CD4-positive, alpha-beta memory T cell (primary cell): ENCODE measurements at regions of chr6 and their contacts with region 1.

Region 1: DNA sequence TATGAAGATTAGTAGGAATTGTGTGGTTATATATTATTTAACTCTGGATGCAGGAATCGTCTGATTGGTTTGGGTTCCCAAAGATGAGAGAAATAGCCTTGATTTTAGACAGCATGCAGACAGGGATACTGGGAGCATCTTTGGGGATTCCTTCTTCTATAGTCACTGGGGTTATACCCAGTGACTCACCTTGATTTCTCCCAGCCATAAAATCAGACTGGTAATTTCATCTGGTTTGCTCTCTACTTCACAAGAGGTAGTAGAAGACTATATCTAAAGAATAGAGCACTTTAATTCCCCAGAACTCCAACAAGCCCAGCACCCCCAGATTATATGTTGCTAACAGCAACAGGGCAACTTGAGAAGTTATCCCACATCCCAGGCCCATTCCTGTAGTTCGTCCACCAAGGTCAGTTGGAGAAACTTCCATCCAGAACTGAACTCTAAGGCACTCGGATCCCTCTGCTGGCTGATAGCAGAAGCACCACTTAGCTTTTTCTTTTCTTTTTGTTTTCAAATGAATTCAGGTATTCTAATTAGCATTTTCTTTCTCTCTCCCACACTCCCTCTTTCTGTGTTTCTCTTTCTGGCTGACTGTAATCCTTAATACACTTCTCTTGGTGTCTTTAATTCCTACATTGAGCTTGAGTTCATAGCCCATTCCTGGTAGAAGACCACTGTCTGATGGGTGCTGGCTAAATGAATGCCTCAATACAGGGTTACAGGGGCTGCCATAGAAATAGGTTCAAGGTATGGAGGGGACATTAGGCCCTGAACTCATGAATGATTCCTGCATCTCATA is 20.4 kb upstream of the EFHC1 start:
- DNase-seq: peak; percentile 36 to 53 (median 47)
- H3K4me3 ChIP-seq: no peak overlapping the region
- H3K4me3 Mint-ChIP-seq: peak overlapping the region in 7 of 8 donors; percentile 32 to 82 (median 63)
- H3K27ac ChIP-seq: peak overlapping the region; percentile 67
- H3K27ac Mint-ChIP-seq: peak overlapping the region; percentile 95 to 99 (median 96)
- H3K4me1 ChIP-seq: peaks cover 68% of the 10 kb centered on the region
- H3K4me1 Mint-ChIP-seq: peaks cover 51 to 84% (median 60%) of the 10 kb centered on the region in 4 donors
- H3K27me3 ChIP-seq: no peaks in the 10 kb centered on the region
- H3K27me3 Mint-ChIP-seq: no peaks in the 10 kb centered on the region

Region 2: GRCh38 chr6:52074155-52074554 is 325.6 kb before region 1 on chr6:
- CTCF ChIA-PET with region 1: no interaction called
- POLR2A ChIA-PET with region 1: no interaction called
- intact Hi-C with region 1: no loop called
- DNase-seq: no peak
- H3K4me3 ChIP-seq: no peak overlapping the region
- H3K4me3 Mint-ChIP-seq: no peak overlapping the region
- H3K27ac ChIP-seq: no peak overlapping the region
- H3K27ac Mint-ChIP-seq: no peak overlapping the region
- H3K4me1 ChIP-seq: no peaks in the 10 kb centered on the region
- H3K4me1 Mint-ChIP-seq: no peaks in the 10 kb centered on the region
- H3K27me3 ChIP-seq: no peaks in the 10 kb centered on the region
- H3K27me3 Mint-ChIP-seq: peaks cover 8 to 16% of the 10 kb centered on the region in 2 donors

Region 3: DNA sequence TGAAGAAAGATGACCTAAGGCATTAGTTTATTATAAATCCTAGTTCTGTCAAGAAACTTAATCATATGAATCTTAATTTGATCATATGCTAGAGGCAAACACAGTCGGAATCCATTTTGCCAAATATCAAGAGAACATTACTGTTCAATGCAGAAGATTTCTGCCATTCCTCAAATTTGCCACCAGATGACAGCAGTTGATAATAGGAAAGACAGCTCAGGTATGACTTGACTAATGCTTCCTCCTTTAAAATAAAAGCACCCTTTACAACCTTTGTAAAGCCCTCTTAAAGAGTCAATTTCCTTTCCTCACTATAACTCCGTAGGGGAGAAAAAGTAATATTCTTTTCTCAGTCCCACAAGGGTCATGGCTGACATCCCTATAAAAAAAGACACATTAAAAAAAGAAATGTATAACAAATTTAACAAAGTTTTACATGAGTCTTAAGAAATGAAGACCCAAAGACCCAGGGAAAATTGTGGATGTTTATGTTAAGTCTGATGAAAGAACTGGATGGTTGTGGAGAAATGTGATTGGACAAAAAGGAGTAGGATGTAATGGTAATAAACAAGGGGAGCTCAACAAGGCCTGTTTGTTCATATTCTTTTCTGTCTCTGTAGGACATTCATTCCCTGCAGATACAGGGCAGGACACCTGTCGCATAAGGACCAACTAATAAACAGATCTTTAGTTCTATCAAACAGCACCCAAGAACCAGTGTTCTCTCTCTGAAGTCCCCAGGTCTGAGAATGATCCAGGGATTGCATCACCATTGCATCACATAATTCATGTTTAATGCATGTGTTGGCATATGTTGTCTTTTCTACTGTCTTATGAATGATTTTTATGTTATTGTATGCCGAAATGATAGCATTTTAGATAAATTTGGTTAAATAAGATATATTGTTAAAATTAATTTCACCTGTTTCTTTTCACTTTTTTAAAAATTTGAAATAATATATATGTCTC is 236.5 kb before region 1 on chr6:
- CTCF ChIA-PET with region 1: interaction called, 3 read pairs
- POLR2A ChIA-PET with region 1: no interaction called
- intact Hi-C with region 1: loop called (anchors 10 kb)
- DNase-seq: peak in 4 of 5 donors; percentile 22 to 33 (median 28)
- H3K4me3 ChIP-seq: no peak overlapping the region
- H3K4me3 Mint-ChIP-seq: no peak overlapping the region
- H3K27ac ChIP-seq: no peak overlapping the region
- H3K27ac Mint-ChIP-seq: no peak overlapping the region
- H3K4me1 ChIP-seq: no peaks in the 10 kb centered on the region
- H3K4me1 Mint-ChIP-seq: no peaks in the 10 kb centered on the region
- H3K27me3 ChIP-seq: no peaks in the 10 kb centered on the region
- H3K27me3 Mint-ChIP-seq: peaks cover under 1 to 13% of the 10 kb centered on the region in 2 donors

Region 4: GRCh38 chr6:52253494-52253893 is 146.2 kb before region 1 on chr6:
- CTCF ChIA-PET with region 1: no interaction called
- POLR2A ChIA-PET with region 1: no interaction called
- intact Hi-C with region 1: no loop called
- DNase-seq: no peak
- H3K4me3 ChIP-seq: no peak overlapping the region
- H3K4me3 Mint-ChIP-seq: peak overlapping the region in 2 of 8 donors; percentile 9 to 53
- H3K27ac ChIP-seq: no peak overlapping the region
- H3K27ac Mint-ChIP-seq: peak overlapping the region in 1 of 7 donors; percentile 10
- H3K4me1 ChIP-seq: no peaks in the 10 kb centered on the region
- H3K4me1 Mint-ChIP-seq: peaks cover 5 to 6% (median 5%) of the 10 kb centered on the region in 4 donors
- H3K27me3 ChIP-seq: no peaks in the 10 kb centered on the region
- H3K27me3 Mint-ChIP-seq: peaks cover 17 to 37% of the 10 kb centered on the region in 2 donors

Region 5: DNA sequence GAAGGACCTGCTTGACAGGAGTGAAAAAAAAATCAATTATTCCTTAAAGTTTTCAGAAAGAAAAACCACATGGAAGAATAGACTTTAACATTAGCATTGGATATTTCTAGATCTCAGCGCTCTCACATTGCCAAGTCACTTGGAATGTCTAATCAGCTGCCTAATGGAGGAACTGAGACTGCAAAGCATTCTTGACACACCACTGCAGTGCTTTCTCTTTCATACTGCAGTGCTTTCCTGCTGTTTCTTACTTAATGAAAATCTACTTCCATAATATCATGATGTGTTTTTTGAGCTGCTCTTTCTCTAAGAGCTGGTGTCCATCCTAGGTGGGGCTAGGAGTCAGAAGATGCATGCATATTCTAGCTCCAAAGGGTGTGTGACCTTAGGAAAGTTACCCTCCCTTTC is 94.7 kb before region 1 on chr6:
- CTCF ChIA-PET with region 1: interaction called, 14 read pairs
- POLR2A ChIA-PET with region 1: interaction called, 41 read pairs
- intact Hi-C with region 1: no loop called
- DNase-seq: peak in 1 of 5 donors; percentile 22
- H3K4me3 ChIP-seq: peak overlapping the region in 1 of 2 donors; percentile 34
- H3K4me3 Mint-ChIP-seq: peak overlapping the region; percentile 73 to 92 (median 82)
- H3K27ac ChIP-seq: peak overlapping the region; percentile 59
- H3K27ac Mint-ChIP-seq: peak overlapping the region; percentile 88 to 96 (median 94)
- H3K4me1 ChIP-seq: peaks cover 73% of the 10 kb centered on the region
- H3K4me1 Mint-ChIP-seq: peaks cover 54 to 89% (median 71%) of the 10 kb centered on the region in 4 donors
- H3K27me3 ChIP-seq: no peaks in the 10 kb centered on the region
- H3K27me3 Mint-ChIP-seq: no peaks in the 10 kb centered on the region

Region 6: GRCh38 chr6:52337633-52338290 is 62.0 kb before region 1 on chr6:
- CTCF ChIA-PET with region 1: interaction called, 7 read pairs
- POLR2A ChIA-PET with region 1: interaction called, 15 read pairs
- intact Hi-C with region 1: no loop called
- DNase-seq: no peak
- H3K4me3 ChIP-seq: no peak overlapping the region
- H3K4me3 Mint-ChIP-seq: peak overlapping the region in 1 of 8 donors; percentile 48
- H3K27ac ChIP-seq: no peak overlapping the region
- H3K27ac Mint-ChIP-seq: peak overlapping the region in 5 of 7 donors; percentile 38 to 86 (median 66)
- H3K4me1 ChIP-seq: peaks cover 60% of the 10 kb centered on the region
- H3K4me1 Mint-ChIP-seq: peaks cover 43 to 67% (median 53%) of the 10 kb centered on the region in 4 donors
- H3K27me3 ChIP-seq: no peaks in the 10 kb centered on the region
- H3K27me3 Mint-ChIP-seq: no peaks in the 10 kb centered on the region

Region 7: GRCh38 chr6:52377538-52378221 is 22.0 kb before region 1 on chr6:
- CTCF ChIA-PET with region 1: interaction called, 15 read pairs
- POLR2A ChIA-PET with region 1: interaction called, 16 read pairs
- intact Hi-C with region 1: no loop called
- DNase-seq: peak in 2 of 5 donors; percentile 19 to 48
- H3K4me3 ChIP-seq: no peak overlapping the region
- H3K4me3 Mint-ChIP-seq: peak overlapping the region; percentile 8 to 83 (median 59)
- H3K27ac ChIP-seq: no peak overlapping the region
- H3K27ac Mint-ChIP-seq: peak overlapping the region; percentile 58 to 89 (median 86)
- H3K4me1 ChIP-seq: peaks cover 67% of the 10 kb centered on the region
- H3K4me1 Mint-ChIP-seq: peaks cover 56 to 86% (median 74%) of the 10 kb centered on the region in 4 donors
- H3K27me3 ChIP-seq: no peaks in the 10 kb centered on the region
- H3K27me3 Mint-ChIP-seq: no peaks in the 10 kb centered on the region

Region 8: DNA sequence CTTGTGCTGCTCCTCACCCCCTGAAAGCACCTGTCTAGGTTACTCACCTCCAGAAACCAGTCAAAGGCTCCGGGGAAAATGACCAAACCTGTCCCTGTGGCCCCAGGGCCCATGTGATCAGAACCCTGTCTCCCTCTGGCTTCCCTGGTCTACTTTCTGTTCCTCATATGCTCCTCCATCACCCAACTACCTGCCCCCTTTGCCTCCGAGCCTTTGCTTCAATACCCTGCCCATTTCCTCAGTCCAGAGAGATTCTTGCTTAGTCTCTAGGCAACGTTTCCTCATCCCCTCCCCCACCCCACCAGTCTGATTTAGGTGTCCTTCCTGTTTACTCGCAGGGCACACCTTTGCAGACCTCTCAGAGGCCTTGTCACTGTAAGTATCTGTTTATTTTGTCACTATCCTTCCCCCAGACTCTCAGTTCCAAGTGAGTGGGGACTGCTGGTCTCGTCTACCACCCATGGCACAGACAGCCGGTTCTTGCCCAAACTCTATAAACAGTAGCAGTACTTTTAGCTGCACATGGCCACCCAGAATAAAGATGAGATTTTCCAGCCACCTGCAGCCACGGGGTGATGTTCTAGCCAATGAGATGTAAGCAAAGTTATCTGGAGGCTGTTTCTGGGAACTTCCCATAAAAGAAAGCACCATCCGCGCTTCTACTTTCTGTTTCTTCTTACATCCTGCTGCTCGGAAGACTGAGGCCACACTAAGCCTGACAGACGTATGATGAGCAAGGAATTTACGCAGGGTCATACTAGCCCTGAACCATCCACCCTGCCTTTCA is 935.7 kb after region 1 on chr6:
- CTCF ChIA-PET with region 1: no interaction called
- POLR2A ChIA-PET with region 1: no interaction called
- intact Hi-C with region 1: loop called (anchors 10 kb)
- DNase-seq: peak; percentile 80 to 92 (median 86)
- H3K4me3 ChIP-seq: peak overlapping the region; percentile 32 to 66
- H3K4me3 Mint-ChIP-seq: peak overlapping the region; percentile 85 to 96 (median 91)
- H3K27ac ChIP-seq: peak overlapping the region; percentile 88
- H3K27ac Mint-ChIP-seq: peak overlapping the region; percentile 95 to 100 (median 99)
- H3K4me1 ChIP-seq: peaks cover 96% of the 10 kb centered on the region
- H3K4me1 Mint-ChIP-seq: peaks cover 80 to 94% (median 87%) of the 10 kb centered on the region in 4 donors
- H3K27me3 ChIP-seq: no peaks in the 10 kb centered on the region
- H3K27me3 Mint-ChIP-seq: no peaks in the 10 kb centered on the region